ENCODE measurements at regions of chr16 and their contacts with region 1.

Region 1: GRCh38 chr16:58755989-58756649 is 22.0 kb upstream of the GOT2 start:
- DNase-seq: peak; percentile 83
- H3K4me3 Mint-ChIP-seq: peak overlapping the region; percentile 43
- H3K27ac Mint-ChIP-seq: peak overlapping the region; percentile 16
- H3K4me1 Mint-ChIP-seq: peaks cover 10% of the 10 kb centered on the region
- H3K27me3 Mint-ChIP-seq: no peaks in the 10 kb centered on the region

Region 2: DNA sequence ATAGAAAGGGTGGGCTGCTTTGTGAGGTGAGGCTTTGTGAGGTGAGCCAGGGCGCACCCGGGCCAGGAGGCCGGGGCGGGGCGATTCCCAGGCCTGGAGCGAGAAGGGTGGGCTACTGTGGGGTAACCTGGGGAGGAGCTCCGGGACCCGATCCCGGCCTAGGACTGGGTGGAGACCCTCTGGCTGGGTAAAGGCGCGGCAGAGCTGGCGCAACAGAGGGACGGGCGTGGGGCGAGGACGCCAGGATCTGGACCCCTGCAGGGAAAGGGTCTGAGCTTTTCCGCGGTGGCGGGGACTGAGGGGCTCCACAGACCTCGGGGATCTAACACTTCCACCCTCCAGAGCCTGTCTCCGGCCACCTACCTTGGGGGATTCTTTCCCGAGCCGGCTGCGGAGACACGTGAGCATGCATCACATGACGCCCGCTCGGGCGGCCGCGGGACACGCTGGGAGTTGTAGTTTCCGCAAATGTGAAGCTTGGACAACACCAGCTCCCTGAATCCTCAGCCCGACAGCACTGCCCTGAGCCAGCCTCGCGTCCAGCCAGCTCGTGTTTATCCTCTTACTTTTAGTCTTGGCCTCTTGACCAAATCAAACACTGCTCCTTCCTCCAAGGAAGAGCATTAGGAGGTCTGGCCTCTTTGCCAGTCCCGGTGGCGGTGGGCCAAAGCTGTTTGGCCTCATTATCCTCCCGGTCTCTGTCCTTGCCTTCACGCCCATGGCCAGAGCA is 71.6 kb before region 1 on chr16 and contains the start of gene SLC38A7:
- CTCF ChIA-PET with region 1: interaction called, 15 read pairs
- POLR2A ChIA-PET with region 1: interaction called, 4 read pairs
- DNase-seq: peak; percentile 80
- H3K4me3 Mint-ChIP-seq: peak within 1 kb of the TSS; percentile 90
- H3K27ac Mint-ChIP-seq: peak within 1 kb of the TSS; percentile 69
- H3K4me1 Mint-ChIP-seq: peaks cover 20% of the 10 kb centered on the region
- H3K27me3 Mint-ChIP-seq: peaks cover 4% of the 10 kb centered on the region
- total RNA-seq, gene SLC38A7: 10.5 to 11.4 TPM

Region 3: DNA sequence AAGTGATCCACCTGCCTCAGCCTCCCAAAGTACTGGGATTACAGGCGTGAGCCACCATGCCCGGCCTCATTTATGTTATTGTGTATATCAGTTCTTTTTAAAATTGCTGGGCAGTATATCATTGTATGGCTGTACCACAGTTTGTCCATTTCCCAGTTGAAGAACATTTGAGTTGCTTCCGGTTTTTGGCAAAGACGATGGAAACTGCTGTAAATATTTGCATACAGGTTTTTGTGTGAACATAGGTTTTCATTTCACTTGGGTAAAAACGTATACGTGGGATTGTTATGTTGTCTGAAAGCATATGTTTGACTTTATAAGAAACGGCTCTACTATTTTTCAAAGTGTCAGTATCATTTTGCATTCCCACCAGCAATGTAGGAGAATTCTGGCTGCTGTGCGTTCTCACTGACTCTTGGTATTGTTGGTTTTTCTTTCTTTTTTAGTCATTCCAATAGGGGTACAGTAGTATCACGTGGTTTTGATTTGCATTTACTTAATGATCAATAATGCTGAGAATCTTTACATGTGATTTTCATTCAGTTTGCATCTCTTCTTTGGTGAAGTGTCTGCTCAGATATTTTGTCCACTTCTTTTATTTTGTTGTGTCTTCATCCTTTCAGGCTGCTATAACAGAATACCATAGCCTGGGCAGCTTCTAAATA is 41.1 kb after region 1 on chr16:
- CTCF ChIA-PET with region 1: no interaction called
- POLR2A ChIA-PET with region 1: no interaction called
- DNase-seq: no peak
- H3K4me3 Mint-ChIP-seq: no peak overlapping the region
- H3K27ac Mint-ChIP-seq: no peak overlapping the region
- H3K4me1 Mint-ChIP-seq: no peaks in the 10 kb centered on the region
- H3K27me3 Mint-ChIP-seq: peaks cover 9% of the 10 kb centered on the region

Measured in activated CD4-positive, alpha-beta memory T cell treated with anti-CD3 and anti-CD28 coated beads, Interleukin-2, amount 10 ng/mL, durations not matched to agents 7 days and 5 days (primary cell).